ENCODE measurements at regions of chr2 and their contacts with region 1.

Region 1: DNA sequence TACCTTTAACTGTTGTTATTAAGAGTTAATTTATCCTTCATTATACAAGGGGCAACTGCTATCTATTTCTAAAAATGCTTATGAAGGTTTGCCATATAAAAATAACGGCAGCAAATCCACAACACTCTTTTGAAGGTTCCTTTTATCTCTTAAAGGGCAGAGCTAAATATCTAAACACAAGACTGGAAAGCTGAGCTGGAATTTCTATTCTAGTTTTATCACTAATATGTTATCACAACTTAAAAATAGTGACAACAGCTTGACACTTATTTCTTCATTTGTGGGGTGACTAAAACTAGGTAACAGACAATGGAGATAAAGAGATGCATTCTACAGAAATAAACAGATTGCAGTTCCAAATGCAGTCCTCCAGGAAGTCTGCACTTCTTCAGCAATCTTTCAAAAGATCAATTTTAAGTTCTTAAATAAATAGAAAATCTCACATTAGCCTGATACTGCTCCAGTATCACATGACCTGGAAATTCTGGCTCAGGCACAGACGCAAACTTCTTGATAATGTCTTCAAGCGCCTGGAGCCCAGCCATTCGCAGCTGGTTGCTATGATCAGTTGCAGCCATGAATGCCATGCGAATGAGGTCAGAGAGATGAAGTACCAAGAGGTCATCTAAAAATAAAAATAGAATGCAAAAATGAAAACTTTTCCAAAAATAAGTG is 54.0 kb upstream of the STRN start:
- DNase-seq: peak; percentile 87

Region 2: DNA sequence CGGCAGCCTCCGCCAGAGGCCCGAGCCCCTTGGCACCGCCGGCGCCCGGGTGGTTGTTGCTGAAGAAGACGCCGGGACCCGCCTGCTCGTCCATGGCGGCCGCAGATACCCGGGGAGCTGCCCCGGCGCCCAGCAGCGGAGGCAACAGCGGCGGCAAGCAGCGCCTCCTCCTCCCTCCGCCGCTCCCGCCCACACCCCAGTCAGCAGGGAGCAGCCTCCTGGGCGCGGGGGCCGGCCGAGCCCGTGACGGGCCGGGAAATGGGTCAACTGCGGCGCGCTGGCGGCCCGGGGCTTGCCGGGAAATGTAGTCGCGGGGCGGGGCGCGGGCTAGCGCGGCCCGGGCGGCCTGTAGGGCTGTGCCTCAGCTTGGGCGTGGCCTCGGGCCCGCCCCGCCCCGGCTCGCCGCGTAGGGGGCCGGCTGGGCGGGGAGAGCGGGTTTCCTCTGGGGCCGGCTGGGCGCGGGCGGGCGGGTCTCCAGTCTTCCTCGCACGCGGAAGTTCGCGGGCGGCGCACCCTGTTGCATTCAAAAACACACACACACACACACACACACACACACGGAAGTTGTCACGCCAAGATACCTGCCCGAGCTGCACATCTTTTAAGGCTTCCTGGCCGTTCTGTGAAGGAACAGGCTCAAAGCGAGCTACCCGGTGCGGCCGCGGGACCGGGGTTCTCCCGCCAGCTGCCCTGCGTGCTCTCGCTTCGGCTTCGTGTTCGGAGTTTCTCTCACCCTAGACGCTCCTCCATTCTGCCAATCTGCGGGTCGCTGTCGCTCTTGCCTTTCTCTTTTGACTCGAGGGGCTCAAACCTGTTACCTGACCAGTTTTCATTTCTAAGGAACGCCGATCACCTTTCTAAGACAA is 53.7 kb before region 1 on chr2 and contains the start of gene STRN:
- intact Hi-C with region 1: loop called (anchors 5 kb)
- DNase-seq: peak; percentile 99
- total RNA-seq, gene STRN: 78.0 TPM

Region 3: DNA sequence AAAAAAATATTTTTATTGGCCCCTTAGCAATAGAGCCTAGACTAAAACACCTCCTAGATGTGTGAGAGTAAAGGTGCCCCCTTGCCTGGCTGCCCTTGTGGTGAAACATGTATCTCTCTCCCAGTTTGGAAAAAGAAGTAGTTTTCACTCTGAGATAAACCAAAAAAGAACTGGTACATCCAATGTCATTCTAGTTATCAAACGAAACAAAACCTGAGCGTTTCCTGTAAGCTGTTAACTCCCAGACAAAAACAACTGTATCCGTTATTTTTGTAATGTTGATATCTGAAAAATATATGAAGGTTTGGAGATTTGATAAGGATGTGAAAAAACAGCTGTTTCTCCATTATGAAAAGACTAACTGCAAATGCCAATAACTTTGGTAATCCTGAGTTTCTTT is 39.5 kb after region 1 on chr2:
- intact Hi-C with region 1: no loop called
- DNase-seq: no peak

Measured in cardiac septum (tissue), 1 donor.